Common myeloid progenitor, CD34-positive (primary cell): ENCODE measurements at regions of chr3 and their contacts with region 1.

Region 1: DNA sequence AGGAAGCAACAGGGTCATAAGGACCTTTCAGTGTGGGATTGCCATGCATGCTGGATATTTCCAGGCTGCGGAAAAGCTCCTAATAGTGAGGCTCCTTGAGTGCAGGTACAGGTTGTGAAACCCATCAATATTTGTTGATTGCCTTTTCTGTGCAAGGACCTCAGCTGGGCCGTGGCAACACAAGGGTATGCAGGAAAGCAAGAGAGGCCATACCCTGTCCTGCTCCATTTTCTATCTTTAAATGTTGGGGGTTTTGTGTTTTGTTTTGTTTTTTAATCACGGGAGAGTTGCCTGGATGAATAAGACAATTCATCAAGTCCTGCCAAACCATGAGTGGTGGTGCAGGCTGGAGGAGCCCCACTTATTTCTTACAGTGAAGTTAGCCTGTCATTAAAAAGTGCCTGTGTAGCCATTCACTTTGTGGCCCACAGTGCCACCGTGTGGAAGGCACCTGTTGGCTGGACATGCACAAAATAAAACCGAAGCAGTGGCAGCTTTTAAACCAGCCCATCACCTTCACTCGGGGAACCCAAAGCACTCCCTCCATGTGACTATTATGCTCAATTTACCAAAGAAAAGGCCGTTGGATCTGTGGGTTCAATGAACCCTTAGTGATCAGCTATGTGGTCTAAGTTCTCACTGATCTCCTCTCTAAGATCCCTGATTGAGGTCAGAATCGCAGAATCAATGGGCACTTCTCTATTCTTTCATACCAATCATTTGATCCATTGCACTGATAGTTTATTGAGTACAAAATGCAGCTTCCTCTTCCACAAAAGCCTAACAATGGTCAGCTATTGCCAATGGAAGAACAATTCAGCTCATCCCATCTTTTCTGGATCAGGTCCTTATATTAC is 42.2 kb downstream of the CLDN18 start:
- DNase-seq: peak; percentile 16 to 52 (median 33)
- H3K4me3 ChIP-seq: no peak overlapping the region
- H3K27ac ChIP-seq: no peak overlapping the region
- H3K4me1 ChIP-seq: no peaks in the 10 kb centered on the region
- H3K27me3 ChIP-seq: no peaks in the 10 kb centered on the region

Region 2: DNA sequence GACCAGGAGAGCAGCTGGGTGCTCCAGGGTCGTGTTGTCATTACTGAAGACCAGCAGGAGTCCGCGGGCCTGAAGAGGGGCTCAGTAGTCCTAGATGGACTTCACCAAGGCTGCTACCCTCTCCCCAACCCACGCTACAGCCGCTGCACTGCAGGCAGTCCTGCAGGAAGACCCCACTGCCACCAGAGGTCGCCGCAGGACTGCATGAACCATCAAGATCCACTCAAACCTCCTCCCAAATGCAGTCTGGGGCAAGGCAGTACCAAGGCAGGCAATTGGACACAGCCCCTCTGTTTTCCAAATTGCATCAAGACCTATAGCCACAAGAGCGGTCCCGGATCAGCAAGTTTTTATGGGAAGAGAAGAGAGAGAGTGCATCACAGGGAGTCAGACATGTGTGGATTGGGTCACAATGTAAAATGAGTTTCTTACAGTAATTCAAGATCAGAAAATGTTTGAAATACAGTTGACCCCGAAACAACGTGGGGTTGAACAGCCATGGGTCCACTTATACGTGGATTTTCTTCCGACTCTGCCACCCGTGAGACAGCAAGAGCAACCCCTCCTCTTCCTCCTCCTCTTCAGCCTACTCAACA is 16.5 kb after region 1 on chr3:
- CTCF ChIA-PET with region 1: interaction called, 13 read pairs
- POLR2A ChIA-PET with region 1: no interaction called
- DNase-seq: peak; percentile 77 to 86 (median 81)
- H3K4me3 ChIP-seq: no peak overlapping the region
- H3K27ac ChIP-seq: no peak overlapping the region
- H3K4me1 ChIP-seq: no peaks in the 10 kb centered on the region
- H3K27me3 ChIP-seq: no peaks in the 10 kb centered on the region

Region 3: DNA sequence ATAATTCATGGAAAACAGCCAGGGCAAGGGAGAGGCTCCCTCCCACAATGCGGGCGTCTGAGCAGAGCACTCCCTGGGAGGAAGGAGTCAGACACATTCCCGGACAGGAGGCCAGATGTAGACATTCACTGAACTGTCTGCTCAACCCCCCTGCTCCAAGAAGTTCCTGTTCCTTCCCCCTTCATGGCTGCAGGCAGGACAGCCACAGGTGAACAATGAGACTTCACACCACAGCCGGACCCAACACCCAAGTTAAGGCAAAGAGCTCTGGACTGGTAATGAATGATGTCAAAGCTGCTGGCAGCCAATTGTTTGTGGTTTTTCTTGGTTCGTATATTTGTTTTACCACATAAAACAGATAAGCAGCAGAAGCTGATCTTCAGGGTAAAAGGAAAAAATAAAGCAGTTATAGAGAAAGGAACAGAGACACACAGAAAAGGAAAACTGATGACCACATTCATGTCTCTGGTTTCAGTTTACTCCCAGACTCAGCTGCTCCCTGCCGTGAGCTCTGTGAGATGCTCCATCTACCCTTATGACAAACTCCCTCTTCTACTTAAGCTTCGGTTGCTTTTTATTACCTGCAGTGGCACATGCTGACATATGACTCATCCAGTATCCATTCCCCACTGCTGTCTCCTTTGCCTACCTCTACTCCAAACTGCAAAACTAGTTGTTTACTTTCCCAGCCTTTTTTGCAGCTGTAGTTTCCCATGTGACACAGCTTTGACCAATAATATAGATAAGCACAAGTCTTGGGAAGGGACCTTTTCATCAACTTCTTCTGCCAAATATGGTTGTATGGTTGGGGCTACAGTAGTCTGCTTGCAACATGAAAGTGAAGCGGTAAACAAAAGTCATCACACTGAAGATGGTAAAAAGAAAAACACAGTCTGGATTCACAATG is 30.2 kb after region 1 on chr3:
- CTCF ChIA-PET with region 1: no interaction called
- POLR2A ChIA-PET with region 1: no interaction called
- DNase-seq: peak in 2 of 3 donors; percentile 17 to 38
- H3K4me3 ChIP-seq: no peak overlapping the region
- H3K27ac ChIP-seq: no peak overlapping the region
- H3K4me1 ChIP-seq: no peaks in the 10 kb centered on the region
- H3K27me3 ChIP-seq: no peaks in the 10 kb centered on the region